Caco-2 (cell line): ENCODE measurements at regions of chr5 and their contacts with region 1.

Region 1: DNA sequence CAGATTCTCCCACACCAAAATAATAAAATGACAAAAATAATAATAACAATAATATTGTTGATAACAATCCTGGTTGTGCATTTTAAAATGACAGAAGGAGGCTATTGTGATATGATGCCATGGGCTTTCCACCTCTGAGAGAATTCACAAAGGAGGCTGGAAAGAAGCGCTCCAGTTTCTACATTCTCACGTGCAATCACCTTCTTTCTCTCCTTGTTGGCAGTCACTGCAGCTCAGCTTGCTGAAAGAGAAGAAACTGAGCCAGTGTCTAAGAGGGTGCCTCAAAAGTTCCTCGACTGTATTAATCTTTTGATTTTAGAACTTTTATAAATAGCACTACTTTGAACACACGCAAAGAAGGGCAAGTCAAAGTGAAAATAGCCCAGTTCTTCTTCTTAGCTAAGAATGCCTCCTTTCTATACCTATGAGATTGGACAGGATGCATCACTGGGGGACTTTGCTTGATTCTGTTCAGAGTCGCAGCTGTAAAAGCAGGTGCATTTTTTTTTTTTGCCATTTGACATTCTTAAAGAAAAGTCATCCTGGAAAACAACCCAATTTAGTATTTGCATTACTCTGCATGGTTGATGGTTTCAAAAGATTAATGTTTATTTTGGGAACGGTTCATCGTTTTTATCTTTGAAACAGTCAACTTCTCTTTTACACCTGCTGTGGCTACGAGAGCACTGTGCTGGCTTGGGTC is 12.4 kb upstream of the SUB1 start:
- DNase-seq: no peak
- H3K4me3 ChIP-seq: no peak overlapping the region
- H3K4me3 Mint-ChIP-seq: no peak overlapping the region
- H3K27ac Mint-ChIP-seq: no peak overlapping the region
- H3K4me1 ChIP-seq: peaks cover 24% of the 10 kb centered on the region
- H3K4me1 Mint-ChIP-seq: no peaks in the 10 kb centered on the region
- H3K27me3 ChIP-seq: no peaks in the 10 kb centered on the region
- H3K27me3 Mint-ChIP-seq: no peaks in the 10 kb centered on the region
- CTCF ChIP-seq: no peak

Region 2: DNA sequence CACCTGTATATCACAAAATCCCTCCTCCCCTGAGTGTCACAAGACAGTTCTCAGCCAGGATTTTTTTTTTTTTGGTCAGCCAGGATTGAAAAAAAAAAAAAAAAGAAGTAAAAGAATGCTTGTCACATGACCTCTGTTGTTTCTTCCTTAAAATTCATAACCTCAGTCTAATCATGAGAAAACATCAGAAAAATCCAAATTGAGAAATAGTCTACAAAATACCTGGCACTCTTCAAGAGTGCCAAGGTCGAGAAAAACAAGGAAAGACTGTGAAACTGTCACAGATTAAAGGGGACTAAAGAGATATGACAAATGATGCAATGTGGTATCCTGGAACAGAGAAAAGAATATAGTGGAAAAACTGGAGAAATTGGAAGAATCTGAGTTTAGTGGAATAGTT is 46.1 kb before region 1 on chr5:
- CTCF ChIA-PET with region 1: no interaction called
- POLR2A ChIA-PET with region 1: no interaction called
- intact Hi-C with region 1: loop called (anchors 5 kb)
- DNase-seq: no peak
- H3K4me3 ChIP-seq: no peak overlapping the region
- H3K4me3 Mint-ChIP-seq: no peak overlapping the region
- H3K27ac Mint-ChIP-seq: peak overlapping the region; percentile 26
- H3K4me1 ChIP-seq: peaks cover 10% of the 10 kb centered on the region
- H3K4me1 Mint-ChIP-seq: peaks cover 12% of the 10 kb centered on the region
- H3K27me3 ChIP-seq: no peaks in the 10 kb centered on the region
- H3K27me3 Mint-ChIP-seq: no peaks in the 10 kb centered on the region
- CTCF ChIP-seq: no peak

Region 3: GRCh38 chr5:32628048-32628803 is 55.3 kb after region 1 on chr5:
- CTCF ChIA-PET with region 1: no interaction called
- POLR2A ChIA-PET with region 1: no interaction called
- intact Hi-C with region 1: no loop called
- DNase-seq: peak in 1 of 2 experiments; percentile 30
- H3K4me3 ChIP-seq: no peak overlapping the region
- H3K4me3 Mint-ChIP-seq: no peak overlapping the region
- H3K27ac Mint-ChIP-seq: no peak overlapping the region
- H3K4me1 ChIP-seq: no peaks in the 10 kb centered on the region
- H3K4me1 Mint-ChIP-seq: no peaks in the 10 kb centered on the region
- H3K27me3 ChIP-seq: no peaks in the 10 kb centered on the region
- H3K27me3 Mint-ChIP-seq: no peaks in the 10 kb centered on the region
- CTCF ChIP-seq: peak in 1 of 2 experiments; percentile 34